ENCODE measurements at regions of chr7 and their contacts with region 1.

Region 1: GRCh38 chr7:147432079-147432478 is 1158.5 kb upstream of the C7orf33 start:
- DNase-seq: peak in 1 of 2 experiments; percentile 41
- H3K4me3 ChIP-seq: no peak overlapping the region
- H3K4me3 Mint-ChIP-seq: no peak overlapping the region
- H3K27ac Mint-ChIP-seq: peak overlapping the region; percentile 16
- H3K4me1 ChIP-seq: peaks cover 43% of the 10 kb centered on the region
- H3K4me1 Mint-ChIP-seq: peaks cover 37% of the 10 kb centered on the region
- H3K27me3 ChIP-seq: no peaks in the 10 kb centered on the region
- H3K27me3 Mint-ChIP-seq: no peaks in the 10 kb centered on the region
- CTCF ChIP-seq: peak; percentile 17 to 29

Region 2: DNA sequence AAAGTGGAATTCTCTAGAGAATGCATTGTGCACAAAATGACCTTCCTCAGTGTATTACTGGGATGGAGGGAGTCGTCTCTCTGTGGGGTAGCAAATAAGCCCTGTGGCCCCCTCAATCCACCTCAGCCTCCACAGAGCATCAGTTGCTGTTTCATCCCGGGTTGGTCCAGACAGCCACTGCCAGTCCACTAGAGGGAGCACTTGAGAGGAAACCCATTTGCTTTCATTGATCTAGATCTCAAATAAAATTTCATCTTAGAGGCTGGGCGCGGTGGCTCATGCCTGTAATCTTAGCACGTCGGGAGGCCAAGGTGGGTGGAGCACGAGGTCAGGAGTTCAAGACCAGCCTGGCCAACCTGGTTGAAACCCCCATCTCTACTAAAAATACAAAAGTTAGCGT is 186.8 kb before region 1 on chr7:
- CTCF ChIA-PET with region 1: no interaction called
- POLR2A ChIA-PET with region 1: no interaction called
- intact Hi-C with region 1: loop called (anchors 5 kb)
- DNase-seq: peak; percentile 53 to 72
- H3K4me3 ChIP-seq: no peak overlapping the region
- H3K4me3 Mint-ChIP-seq: no peak overlapping the region
- H3K27ac Mint-ChIP-seq: no peak overlapping the region
- H3K4me1 ChIP-seq: no peaks in the 10 kb centered on the region
- H3K4me1 Mint-ChIP-seq: no peaks in the 10 kb centered on the region
- H3K27me3 ChIP-seq: no peaks in the 10 kb centered on the region
- H3K27me3 Mint-ChIP-seq: no peaks in the 10 kb centered on the region
- CTCF ChIP-seq: peak; percentile 77 to 94

Region 3: DNA sequence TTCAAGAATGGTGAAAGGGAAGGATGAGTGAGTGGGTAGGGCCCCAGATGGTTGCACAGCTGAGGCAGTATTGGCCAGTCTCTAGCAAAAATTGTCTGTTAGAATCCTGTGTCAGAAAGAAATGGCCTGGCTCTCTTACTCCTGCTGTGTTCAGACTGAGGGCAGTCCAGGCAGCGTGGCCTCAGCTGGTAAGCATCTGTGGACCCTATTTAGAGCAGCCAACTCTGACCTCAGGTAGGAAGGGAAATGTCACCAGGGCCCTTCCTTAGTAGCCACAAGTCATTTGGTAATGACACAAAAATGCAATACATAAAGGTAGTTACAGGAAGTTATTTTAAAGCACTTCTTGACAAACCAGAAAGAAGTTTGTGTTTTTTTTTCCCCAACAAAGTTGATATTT is 120.7 kb before region 1 on chr7:
- CTCF ChIA-PET with region 1: no interaction called
- POLR2A ChIA-PET with region 1: no interaction called
- intact Hi-C with region 1: no loop called
- DNase-seq: no peak
- H3K4me3 ChIP-seq: no peak overlapping the region
- H3K4me3 Mint-ChIP-seq: no peak overlapping the region
- H3K27ac Mint-ChIP-seq: no peak overlapping the region
- H3K4me1 ChIP-seq: no peaks in the 10 kb centered on the region
- H3K4me1 Mint-ChIP-seq: no peaks in the 10 kb centered on the region
- H3K27me3 ChIP-seq: no peaks in the 10 kb centered on the region
- H3K27me3 Mint-ChIP-seq: no peaks in the 10 kb centered on the region
- CTCF ChIP-seq: no peak

Region 4: GRCh38 chr7:147519062-147519461 is 87.0 kb after region 1 on chr7:
- CTCF ChIA-PET with region 1: no interaction called
- POLR2A ChIA-PET with region 1: no interaction called
- intact Hi-C with region 1: loop called (anchors 1 kb)
- DNase-seq: peak; percentile 78 to 82
- H3K4me3 ChIP-seq: no peak overlapping the region
- H3K4me3 Mint-ChIP-seq: peak overlapping the region; percentile 34
- H3K27ac Mint-ChIP-seq: peak overlapping the region; percentile 90
- H3K4me1 ChIP-seq: peaks cover 24% of the 10 kb centered on the region
- H3K4me1 Mint-ChIP-seq: peaks cover 7% of the 10 kb centered on the region
- H3K27me3 ChIP-seq: no peaks in the 10 kb centered on the region
- H3K27me3 Mint-ChIP-seq: no peaks in the 10 kb centered on the region
- CTCF ChIP-seq: no peak

Region 5: DNA sequence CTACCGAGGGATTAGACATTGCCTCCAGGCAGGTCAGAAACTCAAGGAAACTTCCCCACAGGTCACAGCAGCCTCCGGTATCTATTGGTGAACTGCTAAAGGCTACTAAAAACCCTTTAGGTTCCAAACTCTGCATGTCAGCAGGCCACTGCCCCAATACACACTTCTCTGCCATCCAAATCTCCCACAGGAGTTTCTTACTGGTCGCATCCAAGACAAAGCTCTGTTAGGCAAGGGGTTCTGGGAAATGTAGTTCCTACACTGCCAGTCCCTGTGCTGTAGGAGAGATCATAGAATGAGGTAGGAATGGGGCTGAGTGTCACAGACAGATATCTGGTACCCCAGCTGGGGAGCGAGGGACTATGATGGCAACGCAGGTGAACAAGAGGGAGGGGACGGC is 401.5 kb after region 1 on chr7:
- CTCF ChIA-PET with region 1: no interaction called
- POLR2A ChIA-PET with region 1: no interaction called
- intact Hi-C with region 1: no loop called
- DNase-seq: peak in 1 of 2 experiments; percentile 24
- H3K4me3 ChIP-seq: peak overlapping the region; percentile 2; the same call in 1 of the 2 replicates
- H3K4me3 Mint-ChIP-seq: peak overlapping the region; percentile 46
- H3K27ac Mint-ChIP-seq: no peak overlapping the region
- H3K4me1 ChIP-seq: no peaks in the 10 kb centered on the region
- H3K4me1 Mint-ChIP-seq: no peaks in the 10 kb centered on the region
- H3K27me3 ChIP-seq: no peaks in the 10 kb centered on the region
- H3K27me3 Mint-ChIP-seq: no peaks in the 10 kb centered on the region
- CTCF ChIP-seq: no peak

Region 6: DNA sequence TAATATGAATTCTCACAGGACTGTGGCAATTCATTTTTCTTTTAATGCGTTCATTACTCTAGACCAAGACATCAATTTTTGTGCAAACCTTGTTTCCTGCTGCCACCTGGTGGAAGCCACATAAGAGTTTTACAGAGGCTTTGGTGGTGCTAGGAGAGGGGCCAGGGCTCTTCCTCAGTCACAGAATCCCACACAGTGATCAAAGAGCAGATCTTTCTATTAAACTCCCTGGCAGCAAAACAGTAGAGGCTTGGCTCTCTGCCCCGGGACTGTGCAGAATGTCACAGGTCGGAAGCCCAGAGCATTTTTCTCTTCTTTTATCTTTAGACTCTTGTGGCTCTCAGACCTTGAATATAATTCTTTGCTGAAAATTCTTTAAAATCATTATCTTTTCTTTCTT is 652.1 kb after region 1 on chr7:
- CTCF ChIA-PET with region 1: no interaction called
- POLR2A ChIA-PET with region 1: no interaction called
- intact Hi-C with region 1: loop called (anchors 1 kb)
- DNase-seq: peak; percentile 62 to 64
- H3K4me3 ChIP-seq: no peak overlapping the region
- H3K4me3 Mint-ChIP-seq: no peak overlapping the region
- H3K27ac Mint-ChIP-seq: no peak overlapping the region
- H3K4me1 ChIP-seq: peaks cover 4% of the 10 kb centered on the region; the same call in 1 of the 2 replicates
- H3K4me1 Mint-ChIP-seq: no peaks in the 10 kb centered on the region
- H3K27me3 ChIP-seq: no peaks in the 10 kb centered on the region
- H3K27me3 Mint-ChIP-seq: peaks cover 6% of the 10 kb centered on the region
- CTCF ChIP-seq: peak; percentile 74 to 79

Region 7: DNA sequence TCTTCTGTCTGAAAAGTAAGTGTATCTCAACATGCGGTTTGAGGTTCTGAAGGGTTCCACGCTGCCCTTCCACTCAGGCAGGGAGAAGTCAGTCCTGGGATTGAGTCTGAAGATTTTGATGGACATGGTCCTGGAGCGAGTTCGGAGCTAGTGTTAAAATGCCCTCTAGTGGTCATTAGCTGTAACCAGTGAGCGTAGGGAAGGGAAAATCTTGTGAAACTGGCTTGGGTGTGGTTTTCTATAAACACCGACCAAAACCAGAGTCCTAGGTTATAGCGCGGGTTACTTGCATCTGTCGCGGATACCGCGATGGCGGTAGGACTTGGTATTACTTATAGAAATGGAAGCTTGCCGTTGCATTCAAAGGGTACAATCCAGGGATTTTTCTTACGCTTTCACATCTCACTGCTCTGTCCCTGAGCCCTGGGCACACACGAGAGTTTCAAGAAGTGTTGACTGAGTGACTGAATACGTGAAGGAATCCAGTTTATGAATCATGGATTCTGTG is 810.3 kb after region 1 on chr7:
- CTCF ChIA-PET with region 1: no interaction called
- POLR2A ChIA-PET with region 1: no interaction called
- intact Hi-C with region 1: loop called (anchors 10 kb)
- DNase-seq: peak; percentile 55 to 68
- H3K4me3 ChIP-seq: no peak overlapping the region
- H3K4me3 Mint-ChIP-seq: peak overlapping the region; percentile 43
- H3K27ac Mint-ChIP-seq: no peak overlapping the region
- H3K4me1 ChIP-seq: peaks cover 21% of the 10 kb centered on the region
- H3K4me1 Mint-ChIP-seq: peaks cover 16% of the 10 kb centered on the region
- H3K27me3 ChIP-seq: no peaks in the 10 kb centered on the region
- H3K27me3 Mint-ChIP-seq: no peaks in the 10 kb centered on the region
- CTCF ChIP-seq: peak; percentile 76 to 91